ENCODE measurements at regions of chr2 and their contacts with region 1.

Region 1: GRCh38 chr2:54704688-54705605 is 18.5 kb upstream of the EML6 start:
- DNase-seq: no peak
- H3K4me3 ChIP-seq: no peak overlapping the region
- H3K27ac ChIP-seq: peak overlapping the region in 1 of 3 donors; percentile 9
- H3K4me1 ChIP-seq: peaks cover 12 to 14% of the 10 kb centered on the region in 2 donors
- H3K27me3 ChIP-seq: no peaks in the 10 kb centered on the region
- CTCF ChIP-seq: peak; percentile 34 to 87 (median 58)
- POLR2A ChIP-seq: no peak

Region 2: DNA sequence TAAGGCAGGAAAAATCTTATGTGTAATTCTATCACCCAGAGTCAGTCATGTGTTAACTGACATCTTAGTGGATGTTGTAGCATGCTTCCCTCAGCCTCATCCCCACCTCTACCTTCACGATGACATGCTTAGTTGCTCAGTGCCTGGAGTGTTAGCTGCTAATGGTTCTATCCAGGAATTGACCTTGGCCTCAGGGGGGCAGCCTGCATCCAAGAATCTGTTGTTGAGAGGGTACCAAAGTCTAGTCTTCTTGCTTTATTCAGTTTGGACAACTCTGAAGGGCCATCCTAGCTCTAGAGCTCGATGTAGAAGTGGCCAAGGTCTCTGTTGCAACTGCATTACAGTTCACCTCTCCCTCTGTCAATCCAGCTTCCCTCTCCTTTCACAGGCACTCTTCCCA is 528.4 kb before region 1 on chr2:
- intact Hi-C with region 1: loop called (anchors 5 kb)
- DNase-seq: peak; percentile 81
- H3K4me3 ChIP-seq: no peak overlapping the region
- H3K27ac ChIP-seq: no peak overlapping the region
- H3K4me1 ChIP-seq: peaks cover 0 to 5% of the 10 kb centered on the region in 2 donors
- H3K27me3 ChIP-seq: no peaks in the 10 kb centered on the region
- CTCF ChIP-seq: peak in 5 of 6 experiments; percentile 48 to 77 (median 61)
- POLR2A ChIP-seq: no peak

Region 3: DNA sequence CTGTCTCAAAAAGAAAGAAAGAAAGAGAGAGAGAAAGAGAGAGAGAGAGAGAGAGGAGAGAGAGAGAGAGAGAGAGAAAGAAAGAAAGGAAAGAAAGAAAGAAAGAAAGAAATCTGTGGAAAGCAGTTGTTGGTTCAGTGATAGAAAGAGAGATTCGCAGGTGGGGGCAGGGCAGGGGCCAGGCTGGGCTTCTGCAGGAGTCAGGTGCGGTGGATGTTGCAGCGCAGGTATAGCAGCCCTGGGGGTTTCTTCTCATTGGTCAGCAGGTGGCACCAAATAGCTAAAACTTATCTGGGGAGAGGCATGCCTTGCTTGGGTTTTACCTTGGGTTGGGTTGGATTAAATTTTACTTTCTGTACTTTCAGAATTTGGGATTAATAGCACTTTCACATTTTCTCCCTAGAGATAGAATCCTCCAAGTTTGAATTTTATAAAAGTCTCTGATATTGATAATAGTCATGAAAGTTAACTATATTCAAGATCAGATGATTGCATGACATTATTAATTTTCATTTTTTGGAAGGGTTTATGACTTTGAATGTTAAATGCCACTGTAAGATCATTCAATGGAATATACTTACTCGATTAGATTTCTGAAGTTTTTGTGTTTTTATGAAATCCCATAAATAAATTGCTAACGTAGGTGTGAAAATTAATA is 182.2 kb before region 1 on chr2:
- intact Hi-C with region 1: loop called (anchors 10 kb)
- DNase-seq: peak; percentile 89 to 90
- H3K4me3 ChIP-seq: no peak overlapping the region
- H3K27ac ChIP-seq: peak overlapping the region in 2 of 3 donors; percentile 84 to 88
- H3K4me1 ChIP-seq: peaks cover 33 to 59% of the 10 kb centered on the region in 2 donors
- H3K27me3 ChIP-seq: no peaks in the 10 kb centered on the region
- CTCF ChIP-seq: peak in 4 of 6 experiments; percentile 64 to 87 (median 73)
- POLR2A ChIP-seq: no peak

Region 4: DNA sequence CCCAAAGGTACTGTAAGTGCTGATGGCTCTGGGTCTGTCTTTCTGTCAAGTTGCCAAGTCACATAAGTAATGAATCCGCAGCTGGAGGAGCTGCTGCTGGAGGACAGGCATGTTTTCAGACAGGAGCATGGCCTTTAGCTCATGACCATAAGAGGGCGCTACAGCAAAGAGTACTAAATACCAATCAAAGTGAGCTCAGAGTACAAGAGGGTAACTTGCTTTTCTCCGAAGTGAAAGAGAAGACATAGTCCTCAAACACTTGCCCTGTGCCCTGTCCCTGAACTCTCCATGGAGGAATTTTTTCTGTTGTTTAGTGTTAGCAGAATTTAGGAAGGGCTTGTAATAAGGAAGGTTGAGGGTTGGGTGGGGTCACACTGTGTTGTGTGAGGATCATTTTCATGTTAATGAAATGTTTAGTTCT is 39.5 kb before region 1 on chr2:
- intact Hi-C with region 1: loop called (anchors 5 kb)
- DNase-seq: peak; percentile 46 to 47
- H3K4me3 ChIP-seq: no peak overlapping the region
- H3K27ac ChIP-seq: peak overlapping the region; percentile 64 to 81 (median 80)
- H3K4me1 ChIP-seq: peaks cover 31 to 41% of the 10 kb centered on the region in 2 donors
- H3K27me3 ChIP-seq: no peaks in the 10 kb centered on the region
- CTCF ChIP-seq: peak in 5 of 6 experiments; percentile 42 to 71 (median 62)
- POLR2A ChIP-seq: no peak

Region 5: GRCh38 chr2:54824567-54824966 is 119.6 kb after region 1 on chr2:
- intact Hi-C with region 1: no loop called
- DNase-seq: no peak
- H3K4me3 ChIP-seq: no peak overlapping the region
- H3K27ac ChIP-seq: no peak overlapping the region
- H3K4me1 ChIP-seq: no peaks in the 10 kb centered on the region
- H3K27me3 ChIP-seq: no peaks in the 10 kb centered on the region
- CTCF ChIP-seq: no peak
- POLR2A ChIP-seq: no peak

Measured in thyroid gland (tissue), 4 donors.